H1 (cell line): ENCODE measurements at regions of chr1 and their contacts with region 1.

Region 1: GRCh38 chr1:178513278-178514022 is 541 bp downstream of the TEX35 start:
- DNase-seq: no peak
- H3K4me3 ChIP-seq: no peak overlapping the region
- H3K27ac ChIP-seq: no peak overlapping the region
- H3K4me1 ChIP-seq: peaks cover 0 to 2% (median under 1%) of the 10 kb centered on the region in 4 experiments; a peak in 1 of 7 replicates
- H3K27me3 ChIP-seq: no peaks in the 10 kb centered on the region
- CTCF ChIP-seq: peak in 2 of 3 experiments; percentile 13 to 44; a peak in 2 of 4 replicates
- EP300 ChIP-seq: no peak
- POLR2A ChIP-seq: no peak
- RAD21 ChIP-seq: peak in 1 of 2 experiments; percentile 15; a peak in 2 of 4 replicates

Region 2: DNA sequence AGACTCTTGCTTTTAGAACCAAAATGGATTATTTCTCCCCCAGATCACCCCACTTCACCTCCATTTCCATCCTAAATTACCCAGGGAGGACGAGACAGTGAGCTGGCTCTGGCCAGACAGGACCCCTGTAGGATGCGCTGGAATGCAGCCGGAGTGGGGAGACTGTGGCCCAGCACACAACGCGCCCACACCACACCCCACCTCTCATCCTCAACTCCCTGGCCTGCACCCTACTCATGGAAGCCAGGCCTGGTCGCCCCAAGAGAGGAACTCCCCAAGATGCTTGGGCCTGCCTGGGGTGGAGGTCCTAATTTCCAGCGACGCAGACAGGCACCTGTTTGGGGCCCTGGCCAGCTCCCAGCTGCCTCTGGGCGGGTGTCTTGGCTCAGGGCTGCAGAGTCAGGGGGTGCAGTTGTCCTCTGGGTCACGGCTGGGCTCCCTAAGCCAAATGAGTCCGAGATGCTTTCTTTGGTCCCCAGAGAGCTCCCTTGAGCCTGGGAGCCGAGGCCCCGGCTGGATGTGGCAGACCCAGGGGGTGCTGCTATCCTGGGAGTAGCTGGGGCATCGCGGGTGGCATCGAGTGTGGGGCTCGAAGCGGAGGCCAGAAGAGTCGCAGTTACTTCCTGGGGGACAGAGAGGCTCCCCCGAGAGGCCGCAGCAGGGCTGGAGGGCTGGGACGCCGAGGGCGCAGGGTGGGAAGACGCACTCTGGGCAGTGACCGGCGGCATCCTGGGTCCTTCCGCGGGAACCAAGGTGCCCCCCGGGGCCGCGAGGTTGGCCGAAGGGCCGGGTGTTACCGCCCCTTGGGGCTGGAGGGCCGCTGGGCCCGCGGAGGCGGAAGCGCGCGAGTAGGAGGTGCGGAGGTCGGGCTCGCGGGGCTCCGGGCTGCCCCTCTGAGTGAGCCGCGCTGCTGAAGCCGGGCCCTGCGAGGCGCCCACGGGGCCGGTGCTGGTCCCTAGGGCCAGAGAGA is 27.1 kb before region 1 on chr1:
- CTCF ChIA-PET with region 1: no interaction called
- POLR2A ChIA-PET with region 1: no interaction called
- DNase-seq: peak in 1 of 2 experiments; percentile 54
- H3K4me3 ChIP-seq: peak overlapping the region in 1 of 4 experiments; percentile 33; a peak in 3 of 8 replicates
- H3K27ac ChIP-seq: no peak overlapping the region
- H3K4me1 ChIP-seq: no peaks in the 10 kb centered on the region; a peak in 1 of 7 replicates
- H3K27me3 ChIP-seq: no peaks in the 10 kb centered on the region
- CTCF ChIP-seq: no peak
- EP300 ChIP-seq: no peak
- POLR2A ChIP-seq: no peak
- RAD21 ChIP-seq: no peak

Region 3: GRCh38 chr1:178532392-178532791 is 18.9 kb after region 1 on chr1:
- CTCF ChIA-PET with region 1: interaction called, 238 read pairs
- POLR2A ChIA-PET with region 1: interaction called, 4 read pairs
- DNase-seq: peak; percentile 54 to 94
- H3K4me3 ChIP-seq: no peak overlapping the region; a peak in 1 of 8 replicates
- H3K27ac ChIP-seq: no peak overlapping the region
- H3K4me1 ChIP-seq: peaks cover 0 to 2% (median under 1%) of the 10 kb centered on the region in 4 experiments; a peak in 1 of 7 replicates
- H3K27me3 ChIP-seq: no peaks in the 10 kb centered on the region; a peak in 1 of 7 replicates
- CTCF ChIP-seq: peak; percentile 89 to 96 (median 94)
- EP300 ChIP-seq: no peak
- POLR2A ChIP-seq: no peak
- RAD21 ChIP-seq: peak; percentile 96 to 97

Region 4: DNA sequence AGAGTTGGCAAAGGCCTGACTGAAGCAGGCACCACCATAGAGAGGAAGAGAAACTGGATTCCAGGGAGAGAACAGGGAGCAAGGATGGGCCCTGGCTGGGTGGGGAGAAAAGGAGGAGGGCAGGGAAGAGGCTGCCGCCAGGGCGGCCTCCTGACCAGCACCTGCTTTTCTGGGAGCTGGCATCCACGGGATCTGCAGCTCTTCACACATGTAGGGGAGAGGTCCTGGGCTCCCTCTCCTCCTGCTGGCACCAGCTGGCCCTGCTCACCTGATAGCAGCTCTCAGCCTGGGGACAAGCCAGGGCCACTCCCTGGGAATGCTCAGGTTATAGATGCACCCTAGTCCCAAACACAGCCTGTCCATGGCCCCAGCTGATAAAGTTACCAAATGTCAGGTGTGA is 39.4 kb after region 1 on chr1:
- CTCF ChIA-PET with region 1: no interaction called
- POLR2A ChIA-PET with region 1: no interaction called
- DNase-seq: no peak
- H3K4me3 ChIP-seq: no peak overlapping the region
- H3K27ac ChIP-seq: no peak overlapping the region
- H3K4me1 ChIP-seq: no peaks in the 10 kb centered on the region
- H3K27me3 ChIP-seq: no peaks in the 10 kb centered on the region
- CTCF ChIP-seq: no peak
- EP300 ChIP-seq: no peak
- POLR2A ChIP-seq: no peak
- RAD21 ChIP-seq: no peak

Region 5: GRCh38 chr1:178664278-178664677 is 150.8 kb after region 1 on chr1:
- CTCF ChIA-PET with region 1: no interaction called
- POLR2A ChIA-PET with region 1: no interaction called
- DNase-seq: no peak
- H3K4me3 ChIP-seq: no peak overlapping the region
- H3K27ac ChIP-seq: no peak overlapping the region
- H3K4me1 ChIP-seq: no peaks in the 10 kb centered on the region
- H3K27me3 ChIP-seq: no peaks in the 10 kb centered on the region
- CTCF ChIP-seq: no peak
- EP300 ChIP-seq: no peak
- POLR2A ChIP-seq: no peak
- RAD21 ChIP-seq: no peak

Region 6: GRCh38 chr1:178774263-178774662 is 260.8 kb after region 1 on chr1:
- CTCF ChIA-PET with region 1: no interaction called
- POLR2A ChIA-PET with region 1: no interaction called
- DNase-seq: no peak
- H3K4me3 ChIP-seq: no peak overlapping the region
- H3K27ac ChIP-seq: no peak overlapping the region
- H3K4me1 ChIP-seq: no peaks in the 10 kb centered on the region
- H3K27me3 ChIP-seq: no peaks in the 10 kb centered on the region
- CTCF ChIP-seq: no peak
- EP300 ChIP-seq: no peak
- POLR2A ChIP-seq: no peak
- RAD21 ChIP-seq: no peak